Cardiac septum (tissue), 1 donor: ENCODE measurements at regions of chr3 and their contacts with region 1.

Region 1: DNA sequence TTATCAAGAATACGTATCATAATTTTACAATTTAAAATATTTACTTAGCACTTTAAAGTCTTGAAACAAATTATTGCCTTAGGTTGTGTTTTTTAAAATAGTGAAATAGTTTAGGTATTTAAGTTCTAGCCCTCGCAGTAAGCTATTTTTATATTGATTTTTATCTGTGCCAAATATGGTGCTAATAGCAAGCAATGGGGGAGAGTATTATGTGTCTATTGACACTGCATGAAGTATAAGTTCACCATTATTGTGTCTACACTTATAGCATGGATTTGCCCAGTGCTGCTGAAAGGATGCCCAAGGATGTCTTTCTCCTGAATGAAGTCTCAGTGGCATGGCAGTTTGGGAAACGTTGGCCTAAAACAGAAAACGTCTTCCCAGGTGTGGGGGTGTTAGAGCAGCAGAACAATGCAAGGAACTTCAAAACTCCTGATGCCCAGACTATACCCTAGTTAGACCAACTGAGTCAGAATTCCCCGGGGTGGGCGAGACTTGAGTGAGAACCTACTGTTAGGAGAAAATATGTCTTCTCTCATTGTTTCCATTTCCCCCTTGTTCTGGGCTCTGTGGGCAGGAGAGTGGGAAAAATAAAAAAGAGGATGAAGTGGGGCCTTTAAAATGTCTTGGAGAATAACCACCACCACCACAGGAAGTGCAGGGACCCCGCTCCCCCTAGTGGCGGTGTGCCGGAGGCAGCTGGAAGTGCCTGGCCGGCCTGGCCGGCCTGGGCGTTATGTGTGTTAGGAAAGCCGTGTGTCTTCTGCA is 104.2 kb upstream of the SLC7A14 start:
- DNase-seq: no peak

Region 2: GRCh38 chr3:170553788-170554757 is 136.0 kb before region 1 on chr3:
- intact Hi-C with region 1: loop called (anchors 5 kb)
- DNase-seq: no peak